Activated CD4-positive, alpha-beta T cell treated with anti-CD3 and anti-CD28 coated beads, Interleukin-2, amount 10 ng/mL, durations not matched to agents 7 days and 5 days (primary cell): ENCODE measurements at regions of chr2 and their contacts with region 1.

Region 1: GRCh38 chr2:176652300-176653182 is 383.3 kb downstream of the MTX2 start:
- DNase-seq: peak; percentile 31
- H3K4me3 Mint-ChIP-seq: no peak overlapping the region
- H3K27ac Mint-ChIP-seq: no peak overlapping the region
- H3K4me1 Mint-ChIP-seq: peaks cover 17% of the 10 kb centered on the region
- H3K27me3 Mint-ChIP-seq: peaks cover 49% of the 10 kb centered on the region

Region 2: DNA sequence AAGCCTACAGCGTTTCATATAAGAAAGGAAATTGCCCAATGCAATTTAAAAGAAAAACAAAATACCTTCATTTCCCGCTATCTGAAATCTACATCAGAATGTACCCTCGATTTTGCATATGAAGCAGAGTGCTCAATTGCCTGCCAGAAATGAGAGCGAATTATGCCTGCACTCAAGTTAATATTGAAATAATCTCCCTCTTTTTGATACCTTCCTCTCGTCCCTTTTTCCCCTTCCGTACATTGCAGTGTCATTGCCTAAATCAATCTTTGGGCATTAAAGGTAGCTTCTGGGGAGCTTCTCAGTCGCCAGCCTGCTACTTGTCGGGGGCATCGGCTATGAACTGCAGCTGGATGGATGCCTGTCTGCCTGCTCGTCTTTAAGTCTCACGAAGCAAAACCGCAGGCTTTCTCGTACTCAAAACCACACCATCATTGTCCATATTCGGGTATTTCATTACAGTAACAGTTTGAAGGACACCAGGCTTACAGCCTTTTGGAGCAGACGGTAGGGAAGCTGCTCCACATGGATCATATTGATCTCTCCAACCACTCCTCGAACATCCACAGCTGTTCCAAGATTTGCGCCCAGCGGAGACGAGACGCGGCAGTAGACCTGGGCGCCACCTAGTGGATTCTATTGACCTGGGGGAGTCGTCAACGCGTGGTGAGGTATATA is 496.1 kb after region 1 on chr2:
- CTCF ChIA-PET with region 1: interaction called, 10 read pairs
- POLR2A ChIA-PET with region 1: no interaction called
- DNase-seq: peak; percentile 82
- H3K4me3 Mint-ChIP-seq: peak overlapping the region; percentile 78
- H3K27ac Mint-ChIP-seq: peak overlapping the region; percentile 51
- H3K4me1 Mint-ChIP-seq: peaks cover 17% of the 10 kb centered on the region
- H3K27me3 Mint-ChIP-seq: peaks cover 56% of the 10 kb centered on the region